ENCODE measurements at regions of chr4 and their contacts with region 1.

Region 1: DNA sequence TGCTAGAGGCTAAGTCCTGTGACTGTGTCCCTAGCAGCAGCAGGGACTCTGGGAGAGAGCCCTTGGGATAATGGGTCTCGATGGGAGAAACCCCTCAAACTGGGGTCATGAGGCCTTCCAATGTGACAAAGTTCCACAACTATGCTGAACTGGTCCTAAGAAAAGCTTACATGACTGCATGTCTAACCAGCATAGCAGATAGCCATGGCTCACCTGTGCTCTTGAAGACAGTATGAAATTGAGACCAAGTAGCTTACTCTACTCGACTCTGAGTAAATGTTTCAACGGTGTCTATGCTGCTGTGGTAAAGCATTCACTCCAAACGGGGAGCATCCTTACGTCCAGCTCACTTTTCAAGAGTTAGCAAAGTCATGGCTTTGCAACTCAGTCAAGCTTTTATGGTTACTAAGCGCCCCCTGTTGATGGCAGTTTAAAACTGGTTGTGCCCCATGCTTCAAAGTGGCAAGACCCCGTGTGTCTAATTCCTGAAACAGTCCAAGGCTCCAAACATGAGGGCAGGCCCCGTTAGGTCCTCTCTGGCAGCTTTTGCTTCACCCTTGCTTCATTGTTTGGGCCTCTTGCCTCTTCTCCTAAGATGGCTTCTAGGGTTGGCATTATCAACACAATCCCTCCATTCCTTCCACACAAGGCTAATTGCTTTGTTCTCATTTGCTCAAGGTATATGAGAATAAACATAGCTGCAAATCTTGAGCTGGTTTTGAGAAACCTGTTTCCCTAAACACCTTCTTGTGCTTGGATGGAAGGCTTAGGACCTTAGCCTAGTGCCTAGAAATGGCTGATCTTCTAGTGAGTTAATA is 46.6 kb downstream of the CCNG2 start:
- DNase-seq: peak in 9 of 10 donors; percentile 52 to 79 (median 63)
- H3K4me3 ChIP-seq: no peak overlapping the region
- H3K27ac ChIP-seq: no peak overlapping the region
- H3K27me3 ChIP-seq: no peaks in the 10 kb centered on the region
- CTCF ChIP-seq: peak; percentile 49 to 96 (median 80)

Region 2: DNA sequence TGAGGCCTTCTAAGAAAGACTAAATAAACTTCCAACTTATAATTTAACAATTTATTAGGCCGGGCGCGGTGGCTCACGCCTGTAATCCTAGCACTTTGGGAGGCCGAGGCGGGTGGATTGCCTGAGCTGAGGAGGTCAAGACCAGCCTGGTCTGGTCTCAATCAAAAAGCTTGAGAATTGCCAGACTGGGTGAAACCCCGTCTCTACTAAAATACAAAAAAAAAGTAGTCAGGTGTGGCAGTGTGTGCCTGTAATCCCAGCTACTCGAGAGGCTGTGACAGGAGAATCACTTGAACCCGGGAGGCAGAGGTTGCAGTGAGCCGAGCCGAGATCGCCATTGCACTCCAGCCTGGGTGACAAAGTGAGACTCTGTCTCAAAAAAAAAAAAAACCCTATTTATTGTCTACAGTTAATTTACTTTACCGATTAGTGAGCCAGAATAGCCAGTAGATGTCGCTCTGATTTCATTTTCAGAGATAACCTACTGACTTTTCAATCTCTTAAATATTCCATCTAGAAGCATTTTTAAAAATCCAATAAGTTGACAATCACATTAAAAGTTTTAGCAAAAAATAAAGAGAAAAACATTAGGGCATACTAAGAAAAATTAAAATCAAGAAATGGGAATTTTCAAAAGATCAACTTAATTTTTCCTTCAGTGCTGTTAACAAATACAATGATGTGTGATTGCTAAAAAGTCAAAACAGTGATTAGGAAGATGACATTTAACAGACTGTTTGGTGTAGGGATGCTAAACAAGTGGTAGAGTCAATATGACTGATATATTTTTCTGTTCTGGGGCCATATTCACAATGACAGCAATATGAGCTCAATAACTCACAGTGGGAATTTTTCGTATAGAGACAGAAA is 772.8 kb before region 1 on chr4:
- intact Hi-C with region 1: loop called in 1 of 2 experiments (anchors 5 kb)
- DNase-seq: no peak
- H3K4me3 ChIP-seq: peak overlapping the region in 16 of 59 donors; percentile 14 to 48 (median 30)
- H3K27ac ChIP-seq: no peak overlapping the region
- H3K27me3 ChIP-seq: no peaks in the 10 kb centered on the region
- CTCF ChIP-seq: peak; percentile 40 to 93 (median 74)

Region 3: DNA sequence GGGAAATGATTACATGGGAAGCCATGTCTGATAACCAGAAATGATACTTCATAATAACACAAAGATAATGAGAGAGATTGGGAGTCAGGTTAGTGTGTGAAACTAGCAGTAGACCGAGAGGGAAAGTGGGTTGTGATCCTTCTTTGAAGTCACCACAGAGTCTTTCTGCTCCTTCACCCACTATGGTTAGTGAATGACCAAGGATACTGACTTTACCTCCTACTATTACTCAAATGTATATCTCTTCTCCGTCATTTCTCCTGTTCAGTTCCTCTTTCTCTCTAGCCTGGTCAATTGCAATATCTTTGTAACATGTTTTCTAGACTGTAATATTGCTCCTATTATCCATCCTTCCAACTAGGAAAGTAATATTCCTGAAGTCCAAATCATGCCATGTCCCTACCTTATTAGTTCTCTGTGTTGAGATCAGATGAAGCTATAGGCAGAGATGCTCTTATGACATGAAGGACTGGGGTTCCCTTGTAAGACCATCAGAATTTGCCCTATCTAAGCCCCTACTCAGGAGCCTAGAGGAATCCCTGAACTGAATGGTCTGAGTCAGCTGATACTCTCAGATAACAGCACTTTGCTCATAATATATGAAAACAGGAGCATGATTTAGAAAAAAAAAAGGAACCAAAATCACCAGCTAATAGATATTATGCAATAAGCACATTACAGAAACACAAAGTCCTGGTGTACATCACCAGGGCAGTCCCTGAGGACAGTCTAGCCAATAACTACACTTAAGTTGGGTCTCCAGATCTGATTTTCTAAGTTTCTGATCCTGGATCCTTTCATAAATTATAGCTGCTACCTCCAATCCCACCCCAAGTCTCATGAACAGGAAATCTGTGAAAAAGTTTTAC is 687.4 kb before region 1 on chr4:
- intact Hi-C with region 1: loop called in 1 of 2 experiments (anchors 5 kb)
- DNase-seq: no peak
- H3K4me3 ChIP-seq: no peak overlapping the region
- H3K27ac ChIP-seq: no peak overlapping the region
- H3K27me3 ChIP-seq: no peaks in the 10 kb centered on the region
- CTCF ChIP-seq: no peak

Region 4: DNA sequence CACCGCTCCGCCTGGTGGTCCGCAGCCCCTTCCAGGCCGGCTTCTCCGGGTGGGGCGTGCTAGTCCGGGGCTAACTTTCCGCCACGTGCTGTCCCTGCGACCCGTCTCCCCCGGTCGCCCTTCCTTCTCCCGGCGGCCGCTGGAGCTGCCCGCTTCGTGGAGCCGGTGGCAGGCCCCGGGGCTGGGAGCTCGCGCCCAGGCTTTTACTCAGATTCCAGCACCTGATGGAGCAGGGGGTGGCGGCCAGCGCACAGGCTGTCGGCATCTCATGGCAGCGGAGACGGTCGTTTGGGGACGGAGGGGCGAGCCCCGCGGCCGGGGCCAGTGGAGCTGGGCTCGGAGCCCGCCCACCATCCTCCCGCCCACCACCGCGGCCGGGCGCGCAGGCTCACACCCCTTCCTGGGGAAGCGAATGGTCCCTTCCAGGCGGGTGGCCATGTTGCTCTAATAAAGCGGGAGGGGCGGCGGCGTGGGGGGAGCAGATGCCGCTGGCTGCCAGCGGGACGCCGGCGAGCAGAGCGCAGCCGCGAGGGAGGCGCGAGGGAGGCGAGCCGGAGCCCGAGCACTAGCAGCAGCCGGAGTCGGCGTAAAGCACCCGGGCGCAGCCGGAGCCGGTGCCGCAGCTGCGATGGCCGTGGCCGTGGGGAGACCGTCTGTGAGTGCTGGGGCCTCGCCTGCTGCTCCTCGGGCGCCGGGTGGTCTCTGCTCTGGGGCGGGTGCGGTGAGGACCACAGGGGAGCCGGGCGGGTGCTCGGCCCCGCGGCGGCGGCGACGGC is 254.1 kb before region 1 on chr4 and contains the start of gene SEPTIN11:
- intact Hi-C with region 1: loop called (anchors 5 to 10 kb)
- DNase-seq: peak; percentile 82 to 93 (median 91)
- H3K4me3 ChIP-seq: peak within 1 kb of the TSS; percentile 64 to 96 (median 86)
- H3K27ac ChIP-seq: peak within 1 kb of the TSS; percentile 74 to 99 (median 93)
- H3K27me3 ChIP-seq: no peaks in the 10 kb centered on the region
- CTCF ChIP-seq: peak in 13 of 56 donors; percentile 3 to 46 (median 10)
- total RNA-seq, gene SEPTIN11: 109 to 284 (median 200) TPM

Region 5: DNA sequence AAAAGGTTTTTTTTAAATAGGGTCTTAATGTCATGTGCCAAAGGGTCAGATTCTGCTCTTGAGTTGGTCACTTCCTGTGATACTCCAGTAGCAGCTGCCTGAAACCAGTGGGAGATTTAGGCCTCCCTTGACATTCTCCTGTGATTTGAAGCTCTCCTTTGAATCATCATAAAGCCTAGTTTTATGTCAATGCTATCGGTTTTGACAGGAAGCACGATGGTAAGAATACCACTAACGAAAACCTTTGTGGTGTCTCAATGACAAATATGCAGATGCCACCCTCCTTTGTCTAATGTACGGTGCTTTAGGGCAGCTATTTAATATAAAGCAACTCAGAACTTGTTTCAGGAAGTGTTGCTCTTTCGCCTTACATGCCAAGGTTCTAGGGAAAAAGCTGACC is 172.0 kb before region 1 on chr4:
- intact Hi-C with region 1: no loop called
- DNase-seq: no peak
- H3K4me3 ChIP-seq: no peak overlapping the region
- H3K27ac ChIP-seq: no peak overlapping the region
- H3K27me3 ChIP-seq: no peaks in the 10 kb centered on the region
- CTCF ChIP-seq: no peak

Region 6: GRCh38 chr4:77044461-77045150 is 159.0 kb before region 1 on chr4:
- intact Hi-C with region 1: loop called in 1 of 2 experiments (anchors 5 kb)
- DNase-seq: no peak
- H3K4me3 ChIP-seq: no peak overlapping the region
- H3K27ac ChIP-seq: peak overlapping the region in 6 of 59 donors; percentile 4 to 53 (median 28)
- H3K27me3 ChIP-seq: no peaks in the 10 kb centered on the region
- CTCF ChIP-seq: peak; percentile 43 to 80 (median 64)

Region 7: DNA sequence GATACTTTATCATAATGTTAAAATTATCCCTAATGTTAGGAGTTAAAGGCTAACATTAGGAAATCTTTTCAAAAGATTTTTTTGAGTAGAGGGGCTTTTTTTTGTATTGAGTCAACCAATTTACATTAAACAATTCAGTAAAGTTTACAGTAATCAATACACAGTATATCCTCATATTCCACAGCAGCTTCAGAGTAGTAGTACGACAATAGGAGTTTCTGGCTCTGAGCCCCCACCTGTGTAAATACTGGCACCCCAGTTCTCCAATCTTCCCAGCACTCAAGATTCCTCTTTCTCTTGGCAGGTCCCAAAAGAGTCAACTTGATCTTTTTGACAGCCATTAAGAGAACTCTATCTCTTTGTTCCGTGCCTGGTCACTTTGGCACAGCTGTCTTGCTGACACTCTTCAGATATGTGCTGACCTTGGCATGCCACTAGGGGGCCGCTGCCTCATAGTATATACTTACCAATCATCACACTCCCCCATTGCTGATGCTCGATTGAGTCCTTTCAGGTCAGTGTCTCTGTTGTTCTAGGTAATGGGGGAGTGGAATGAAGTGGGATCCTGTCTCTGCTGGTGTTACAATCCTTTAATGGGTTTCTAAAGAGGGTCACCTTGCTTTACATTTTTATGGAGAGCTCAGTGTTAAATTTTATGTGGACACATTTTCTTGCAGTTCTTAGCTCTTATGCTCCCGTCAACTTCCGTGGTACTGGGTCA is 108.3 kb before region 1 on chr4:
- intact Hi-C with region 1: loop called (anchors 2 to 5 kb)
- DNase-seq: peak; percentile 74 to 92 (median 80)
- H3K4me3 ChIP-seq: peak overlapping the region in 7 of 59 donors; percentile 1 to 28 (median 9)
- H3K27ac ChIP-seq: no peak overlapping the region
- H3K27me3 ChIP-seq: no peaks in the 10 kb centered on the region
- CTCF ChIP-seq: peak; percentile 73 to 93 (median 86)

Region 8: GRCh38 chr4:77156533-77156911 is 47.1 kb before region 1 on chr4:
- intact Hi-C with region 1: loop called in 1 of 2 experiments (anchors 5 kb)
- DNase-seq: peak; percentile 86 to 99 (median 97)
- H3K4me3 ChIP-seq: peak overlapping the region; percentile 71 to 100 (median 94)
- H3K27ac ChIP-seq: peak overlapping the region; percentile 84 to 99 (median 97)
- H3K27me3 ChIP-seq: no peaks in the 10 kb centered on the region
- CTCF ChIP-seq: peak in 3 of 56 donors; percentile 8 to 11 (median 8)